Caco-2 (cell line): ENCODE measurements at regions of chr7 and their contacts with region 1.

Region 1: GRCh38 chr7:19121977-19122588 is 4.6 kb upstream of the TWIST1 start:
- DNase-seq: peak in 1 of 2 experiments; percentile 12
- H3K4me3 ChIP-seq: no peak overlapping the region
- H3K4me3 Mint-ChIP-seq: no peak overlapping the region
- H3K27ac Mint-ChIP-seq: no peak overlapping the region
- H3K4me1 ChIP-seq: no peaks in the 10 kb centered on the region; the same call in 1 of the 2 replicates
- H3K4me1 Mint-ChIP-seq: no peaks in the 10 kb centered on the region
- H3K27me3 ChIP-seq: no peaks in the 10 kb centered on the region
- H3K27me3 Mint-ChIP-seq: peaks cover 10% of the 10 kb centered on the region
- CTCF ChIP-seq: peak; percentile 50 to 68

Region 2: GRCh38 chr7:19262826-19263225 is 140.7 kb after region 1 on chr7:
- CTCF ChIA-PET with region 1: interaction called, 6 read pairs
- POLR2A ChIA-PET with region 1: no interaction called
- intact Hi-C with region 1: loop called (anchors 1 kb)
- DNase-seq: no peak
- H3K4me3 ChIP-seq: no peak overlapping the region
- H3K4me3 Mint-ChIP-seq: no peak overlapping the region
- H3K27ac Mint-ChIP-seq: no peak overlapping the region
- H3K4me1 ChIP-seq: no peaks in the 10 kb centered on the region
- H3K4me1 Mint-ChIP-seq: no peaks in the 10 kb centered on the region
- H3K27me3 ChIP-seq: no peaks in the 10 kb centered on the region
- H3K27me3 Mint-ChIP-seq: no peaks in the 10 kb centered on the region
- CTCF ChIP-seq: no peak

Region 3: GRCh38 chr7:19442016-19442785 is 320.1 kb after region 1 on chr7:
- CTCF ChIA-PET with region 1: no interaction called
- POLR2A ChIA-PET with region 1: no interaction called
- intact Hi-C with region 1: loop called (anchors 1 kb)
- DNase-seq: peak in 1 of 2 experiments; percentile 24
- H3K4me3 ChIP-seq: no peak overlapping the region
- H3K4me3 Mint-ChIP-seq: no peak overlapping the region
- H3K27ac Mint-ChIP-seq: no peak overlapping the region
- H3K4me1 ChIP-seq: no peaks in the 10 kb centered on the region
- H3K4me1 Mint-ChIP-seq: no peaks in the 10 kb centered on the region
- H3K27me3 ChIP-seq: no peaks in the 10 kb centered on the region
- H3K27me3 Mint-ChIP-seq: peaks cover 8% of the 10 kb centered on the region
- CTCF ChIP-seq: peak in 1 of 2 experiments; percentile 39

Region 4: DNA sequence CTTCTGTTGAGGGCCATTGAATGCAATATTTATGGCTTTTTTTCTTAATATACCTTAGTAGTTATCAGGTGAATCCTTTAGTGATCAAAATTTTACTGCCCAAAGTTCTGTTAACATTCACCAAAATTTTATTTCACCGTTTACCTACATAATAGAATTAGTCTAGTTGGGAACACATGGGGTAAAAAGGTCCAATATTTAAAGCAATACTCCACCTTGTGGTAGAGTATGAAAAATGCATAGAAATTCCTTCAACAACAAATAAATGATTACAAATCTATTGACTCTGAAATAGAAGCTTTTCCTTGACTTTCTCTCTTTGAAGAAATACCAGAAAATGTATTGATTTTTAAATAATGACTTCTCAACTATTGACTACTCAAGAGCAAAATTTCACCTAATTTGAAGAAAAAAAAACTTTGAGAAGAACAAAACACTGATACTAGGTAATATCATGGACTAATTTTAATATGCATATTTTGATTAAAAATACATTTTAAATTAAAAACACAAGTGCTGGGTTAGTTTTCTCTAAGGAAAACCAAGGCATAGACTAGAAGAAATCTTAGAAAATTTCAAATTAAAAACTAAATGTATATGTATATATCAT is 543.4 kb after region 1 on chr7:
- CTCF ChIA-PET with region 1: no interaction called
- POLR2A ChIA-PET with region 1: no interaction called
- intact Hi-C with region 1: loop called (anchors 1 kb)
- DNase-seq: no peak
- H3K4me3 ChIP-seq: no peak overlapping the region
- H3K4me3 Mint-ChIP-seq: no peak overlapping the region
- H3K27ac Mint-ChIP-seq: no peak overlapping the region
- H3K4me1 ChIP-seq: no peaks in the 10 kb centered on the region
- H3K4me1 Mint-ChIP-seq: no peaks in the 10 kb centered on the region
- H3K27me3 ChIP-seq: no peaks in the 10 kb centered on the region
- H3K27me3 Mint-ChIP-seq: peaks cover 19% of the 10 kb centered on the region
- CTCF ChIP-seq: peak; percentile 52 to 58